Activated T-helper 2 cell treated with anti-CD3 and anti-CD28 coated beads, Interferon-gamma antibody, Interleukin-2, Interleukin-4, amounts not matched to agents 10 μg/mL and 5 μg/mL and 100 μg/mL, durations not matched to agents 14 hours and 24 hours and 36 hours (primary cell): ENCODE measurements at regions of chr10 and their contacts with region 1.

Region 1: GRCh38 chr10:62437696-62438095 is 63.5 kb downstream of the ZNF365 start:
- DNase-seq: no peak
- H3K4me3 Mint-ChIP-seq: no peak overlapping the region
- H3K27ac Mint-ChIP-seq: no peak overlapping the region
- H3K4me1 Mint-ChIP-seq: peaks cover 12% of the 10 kb centered on the region
- H3K27me3 Mint-ChIP-seq: peaks cover 50% of the 10 kb centered on the region

Region 2: GRCh38 chr10:62384057-62384446 is 53.6 kb before region 1 on chr10:
- intact Hi-C with region 1: loop called (anchors 1 kb)
- DNase-seq: peak; percentile 55
- H3K4me3 Mint-ChIP-seq: no peak overlapping the region
- H3K27ac Mint-ChIP-seq: peak overlapping the region; percentile 60
- H3K4me1 Mint-ChIP-seq: peaks cover 27% of the 10 kb centered on the region
- H3K27me3 Mint-ChIP-seq: peaks cover 54% of the 10 kb centered on the region

Region 3: GRCh38 chr10:62528441-62528840 is 90.7 kb after region 1 on chr10:
- intact Hi-C with region 1: loop called (anchors 5 kb)
- DNase-seq: no peak
- H3K4me3 Mint-ChIP-seq: peak overlapping the region; percentile 1
- H3K27ac Mint-ChIP-seq: peak overlapping the region; percentile 23
- H3K4me1 Mint-ChIP-seq: peaks cover 33% of the 10 kb centered on the region
- H3K27me3 Mint-ChIP-seq: peaks cover 14% of the 10 kb centered on the region

Region 4: GRCh38 chr10:62594093-62594520 is 156.4 kb after region 1 on chr10:
- intact Hi-C with region 1: loop called (anchors 10 kb)
- DNase-seq: peak; percentile 24
- H3K4me3 Mint-ChIP-seq: no peak overlapping the region
- H3K27ac Mint-ChIP-seq: no peak overlapping the region
- H3K4me1 Mint-ChIP-seq: peaks cover 13% of the 10 kb centered on the region
- H3K27me3 Mint-ChIP-seq: peaks cover 17% of the 10 kb centered on the region

Region 5: GRCh38 chr10:63083904-63084689 is 646.4 kb after region 1 on chr10:
- intact Hi-C with region 1: loop called (anchors 5 kb)
- DNase-seq: peak; percentile 16
- H3K4me3 Mint-ChIP-seq: no peak overlapping the region
- H3K27ac Mint-ChIP-seq: no peak overlapping the region
- H3K4me1 Mint-ChIP-seq: peaks cover 12% of the 10 kb centered on the region
- H3K27me3 Mint-ChIP-seq: peaks cover 23% of the 10 kb centered on the region